ENCODE measurements at regions of chr17 and their contacts with region 1.

Region 1: GRCh38 chr17:68613739-68614298 is 12.7 kb upstream of the FAM20A start:
- DNase-seq: peak; percentile 49 to 66
- H3K4me3 ChIP-seq: no peak overlapping the region
- H3K27ac ChIP-seq: no peak overlapping the region
- H3K4me1 ChIP-seq: no peaks in the 10 kb centered on the region
- H3K27me3 ChIP-seq: no peaks in the 10 kb centered on the region
- CTCF ChIP-seq: peak; percentile 46 to 88 (median 85)
- EP300 ChIP-seq: no peak
- POLR2A ChIP-seq: no peak
- RAD21 ChIP-seq: peak; percentile 80 to 91

Region 2: GRCh38 chr17:68533887-68534694 is 79.7 kb before region 1 on chr17:
- CTCF ChIA-PET with region 1: interaction called, 27 read pairs
- POLR2A ChIA-PET with region 1: no interaction called
- DNase-seq: no peak
- H3K4me3 ChIP-seq: no peak overlapping the region
- H3K27ac ChIP-seq: no peak overlapping the region
- H3K4me1 ChIP-seq: no peaks in the 10 kb centered on the region
- H3K27me3 ChIP-seq: no peaks in the 10 kb centered on the region
- CTCF ChIP-seq: peak in 1 of 3 experiments; percentile 48; a peak in 2 of 4 replicates
- EP300 ChIP-seq: no peak
- POLR2A ChIP-seq: no peak
- RAD21 ChIP-seq: peak; percentile 33 to 44

Region 3: DNA sequence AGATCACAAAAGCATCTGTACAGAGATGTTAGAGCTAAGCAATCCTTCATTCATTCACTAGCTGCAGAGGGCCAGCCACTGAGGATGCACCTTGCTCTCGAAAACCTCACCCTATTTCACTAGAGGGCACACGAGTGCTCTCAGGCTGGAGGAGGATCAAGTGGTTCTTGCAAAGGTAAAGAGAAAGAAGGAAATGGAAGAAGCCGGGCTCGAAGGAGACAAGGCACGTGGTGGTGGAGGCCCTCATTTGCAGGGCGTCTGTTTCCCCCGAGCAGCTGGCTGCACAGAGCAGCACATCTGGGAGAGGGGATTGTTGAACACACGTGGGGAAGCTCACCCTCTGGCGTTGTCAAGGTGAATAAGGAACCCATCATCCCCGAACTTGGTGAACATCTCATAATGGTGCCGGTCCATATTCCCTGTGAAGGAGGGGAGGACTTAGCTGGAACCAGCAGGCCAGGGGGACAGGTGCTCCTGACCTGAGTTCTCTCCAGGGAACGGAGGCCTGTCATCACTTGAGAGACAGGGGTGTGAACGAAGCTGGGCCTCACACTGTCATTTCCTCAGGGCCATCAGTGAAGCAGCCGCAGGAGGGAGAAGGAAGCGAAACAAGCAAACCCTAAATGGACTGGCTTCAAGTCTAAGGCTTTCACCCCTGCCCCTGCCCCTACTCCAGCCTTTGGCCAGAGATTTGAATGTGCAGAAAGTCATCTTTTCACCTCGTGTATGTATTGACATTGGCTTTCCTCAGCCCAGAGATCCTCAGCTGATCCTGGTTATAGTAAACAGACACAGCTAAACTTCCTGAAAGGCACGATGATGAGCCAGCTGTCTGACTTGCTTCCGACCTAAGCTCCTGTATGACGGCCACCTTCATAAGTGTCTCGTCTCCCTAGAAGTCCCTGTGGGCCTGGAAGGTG is 74.0 kb before region 1 on chr17:
- CTCF ChIA-PET with region 1: interaction called, 27 read pairs
- POLR2A ChIA-PET with region 1: no interaction called
- DNase-seq: no peak
- H3K4me3 ChIP-seq: no peak overlapping the region
- H3K27ac ChIP-seq: no peak overlapping the region
- H3K4me1 ChIP-seq: no peaks in the 10 kb centered on the region
- H3K27me3 ChIP-seq: no peaks in the 10 kb centered on the region
- CTCF ChIP-seq: peak; percentile 17 to 34 (median 34); a peak in 3 of 4 replicates
- EP300 ChIP-seq: no peak
- POLR2A ChIP-seq: no peak
- RAD21 ChIP-seq: peak; percentile 54 to 59

Region 4: DNA sequence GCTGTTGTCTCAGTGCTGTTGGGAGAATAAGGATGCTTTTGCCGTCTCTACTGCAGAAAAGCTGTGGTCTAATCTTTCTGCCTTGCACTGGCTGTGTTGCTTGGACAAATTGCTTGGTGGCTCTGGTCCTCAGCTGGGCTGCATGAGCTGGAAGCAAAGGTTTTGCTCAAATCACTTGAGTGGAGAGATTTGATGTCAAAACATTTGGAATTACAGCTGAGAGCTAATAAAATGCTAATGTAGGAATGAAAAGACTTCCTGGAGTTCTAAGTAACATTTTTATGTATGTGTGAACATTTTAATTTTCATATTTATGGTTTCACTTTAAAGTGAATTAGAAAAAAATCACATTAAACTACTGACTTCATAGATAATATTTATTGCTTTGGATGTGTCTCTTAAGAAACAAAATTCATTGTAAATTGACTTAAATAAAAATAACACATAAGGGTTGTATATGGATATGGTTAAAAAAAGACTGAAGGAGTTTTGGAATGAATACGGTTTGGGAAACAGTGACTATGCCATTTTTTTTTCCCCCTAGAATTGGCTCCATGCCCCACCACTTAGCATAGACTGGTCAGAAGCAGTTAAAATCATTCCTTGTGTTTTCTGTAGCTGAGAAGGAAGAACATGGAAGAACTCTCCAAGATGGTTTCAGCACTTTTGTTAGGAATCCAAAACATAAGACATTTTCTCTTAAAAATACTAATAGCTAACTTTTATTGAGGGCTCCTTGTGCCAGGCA is 26.6 kb after region 1 on chr17:
- CTCF ChIA-PET with region 1: interaction called, 10 read pairs
- POLR2A ChIA-PET with region 1: no interaction called
- DNase-seq: no peak
- H3K4me3 ChIP-seq: no peak overlapping the region
- H3K27ac ChIP-seq: no peak overlapping the region
- H3K4me1 ChIP-seq: peaks cover 0 to 4% (median 0%) of the 10 kb centered on the region in 4 experiments; a peak in 1 of 7 replicates
- H3K27me3 ChIP-seq: no peaks in the 10 kb centered on the region
- CTCF ChIP-seq: no peak
- EP300 ChIP-seq: no peak
- POLR2A ChIP-seq: no peak
- RAD21 ChIP-seq: no peak

Measured in H1 (cell line).